Cardiac septum (tissue), 1 donor: ENCODE measurements at regions of chr11 and their contacts with region 1.

Region 1: GRCh38 chr11:127733552-127733951 is 733.0 kb upstream of the KIRREL3 start:
- DNase-seq: no peak

Region 2: GRCh38 chr11:127470306-127470884 is 263.2 kb before region 1 on chr11:
- intact Hi-C with region 1: no loop called
- DNase-seq: no peak

Region 3: GRCh38 chr11:127493330-127494022 is 240.1 kb before region 1 on chr11:
- intact Hi-C with region 1: loop called (anchors 10 kb)
- DNase-seq: no peak